Endothelial cell of umbilical vein (primary cell): ENCODE measurements at regions of chr20 and their contacts with region 1.

Region 1: GRCh38 chr20:17504898-17505635 is 26.1 kb downstream of the BFSP1 start:
- DNase-seq: peak; percentile 72
- H3K4me3 ChIP-seq: peak overlapping the region; percentile 31 to 74 (median 58)
- H3K27ac ChIP-seq: peak overlapping the region; percentile 9
- H3K4me1 ChIP-seq: peaks cover 13% of the 10 kb centered on the region
- H3K27me3 ChIP-seq: no peaks in the 10 kb centered on the region
- CTCF ChIP-seq: peak; percentile 39 to 41
- POLR2A ChIP-seq: peak; percentile 61

Region 2: GRCh38 chr20:17530716-17531664 is 25.9 kb after region 1 on chr20 and contains the start of gene BFSP1:
- CTCF ChIA-PET with region 1: interaction called, 44 read pairs
- POLR2A ChIA-PET with region 1: no interaction called
- dilution Hi-C with region 1: no loop called
- intact Hi-C with region 1: loop called (anchors 1 kb)
- DNase-seq: peak; percentile 72
- H3K4me3 ChIP-seq: peak within 1 kb of the TSS; percentile 16 to 47 (median 45)
- H3K27ac ChIP-seq: peak within 1 kb of the TSS; percentile 41
- H3K4me1 ChIP-seq: peaks cover 15% of the 10 kb centered on the region
- H3K27me3 ChIP-seq: no peaks in the 10 kb centered on the region
- CTCF ChIP-seq: no peak
- POLR2A ChIP-seq: peak; percentile 41
- total RNA-seq, gene BFSP1: 3.7 and 5.2 TPM in 2 replicates

Region 3: GRCh38 chr20:17611540-17612286 is 106.6 kb after region 1 on chr20:
- CTCF ChIA-PET with region 1: interaction called, 58 read pairs
- POLR2A ChIA-PET with region 1: no interaction called
- dilution Hi-C with region 1: no loop called
- intact Hi-C with region 1: loop called (anchors 1 kb)
- DNase-seq: no peak
- H3K4me3 ChIP-seq: no peak overlapping the region
- H3K27ac ChIP-seq: peak overlapping the region; percentile 15
- H3K4me1 ChIP-seq: no peaks in the 10 kb centered on the region
- H3K27me3 ChIP-seq: no peaks in the 10 kb centered on the region
- CTCF ChIP-seq: peak; percentile 28 to 49
- POLR2A ChIP-seq: no peak

Region 4: DNA sequence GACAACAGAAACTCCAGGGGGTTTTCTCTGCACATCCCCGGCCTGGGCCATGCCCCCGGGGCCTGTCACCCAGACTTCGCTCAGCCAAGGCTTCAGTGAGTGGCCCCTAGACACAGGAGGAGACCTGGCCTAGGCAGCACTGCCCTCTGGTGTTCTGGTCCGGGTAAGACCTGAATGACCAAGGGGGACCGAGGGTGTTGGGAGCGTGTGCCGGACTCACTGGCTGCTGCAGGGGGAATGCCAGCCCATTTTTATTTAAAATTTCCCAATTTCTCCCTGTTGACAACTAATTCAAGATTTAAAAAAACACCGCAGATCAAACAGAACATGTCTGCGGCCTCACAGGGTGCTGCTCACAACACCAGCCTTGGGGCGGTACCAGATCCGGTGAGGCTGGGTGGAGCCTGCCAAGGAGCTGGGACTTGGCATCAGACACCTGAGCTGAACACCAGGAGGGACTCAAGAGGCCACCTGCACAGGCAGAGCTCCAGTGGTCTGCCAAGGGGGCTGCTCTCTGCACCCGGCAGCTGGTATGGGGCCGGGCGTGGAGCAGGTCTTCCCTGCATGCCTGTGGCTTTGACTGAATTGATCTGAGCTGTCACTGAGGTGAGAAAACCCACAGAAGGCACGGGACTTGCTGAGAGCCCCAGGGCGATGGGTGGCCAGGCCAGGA is 112.6 kb after region 1 on chr20:
- CTCF ChIA-PET with region 1: interaction called, 58 read pairs
- POLR2A ChIA-PET with region 1: no interaction called
- dilution Hi-C with region 1: no loop called
- intact Hi-C with region 1: loop called (anchors 1 kb)
- DNase-seq: peak; percentile 24
- H3K4me3 ChIP-seq: no peak overlapping the region
- H3K27ac ChIP-seq: no peak overlapping the region
- H3K4me1 ChIP-seq: no peaks in the 10 kb centered on the region
- H3K27me3 ChIP-seq: no peaks in the 10 kb centered on the region
- CTCF ChIP-seq: peak; percentile 58 to 64
- POLR2A ChIP-seq: no peak

Region 5: GRCh38 chr20:17648791-17649730 is 144.0 kb after region 1 on chr20:
- CTCF ChIA-PET with region 1: interaction called, 24 read pairs
- POLR2A ChIA-PET with region 1: no interaction called
- dilution Hi-C with region 1: no loop called
- intact Hi-C with region 1: no loop called
- DNase-seq: no peak
- H3K4me3 ChIP-seq: no peak overlapping the region
- H3K27ac ChIP-seq: no peak overlapping the region
- H3K4me1 ChIP-seq: peaks cover 11% of the 10 kb centered on the region
- H3K27me3 ChIP-seq: no peaks in the 10 kb centered on the region
- CTCF ChIP-seq: peak; percentile 43 to 67
- POLR2A ChIP-seq: no peak

Region 6: GRCh38 chr20:18276821-18277220 is 771.8 kb after region 1 on chr20:
- CTCF ChIA-PET with region 1: no interaction called
- POLR2A ChIA-PET with region 1: no interaction called
- dilution Hi-C with region 1: no loop called
- intact Hi-C with region 1: loop called (anchors 5 kb)
- DNase-seq: peak; percentile 59
- H3K4me3 ChIP-seq: no peak overlapping the region
- H3K27ac ChIP-seq: no peak overlapping the region
- H3K4me1 ChIP-seq: no peaks in the 10 kb centered on the region
- H3K27me3 ChIP-seq: peaks cover 13 to 17% of the 10 kb centered on the region in 2 experiments
- CTCF ChIP-seq: peak; percentile 86 to 89
- POLR2A ChIP-seq: no peak